Activated T-helper 2 cell treated with anti-CD3 and anti-CD28 coated beads, Interferon-gamma antibody, Interleukin-2, Interleukin-4, amounts not matched to agents 10 μg/mL and 5 μg/mL and 100 μg/mL, durations not matched to agents 14 hours and 24 hours and 36 hours (primary cell): ENCODE measurements at regions of chr6 and their contacts with region 1.

Region 1: DNA sequence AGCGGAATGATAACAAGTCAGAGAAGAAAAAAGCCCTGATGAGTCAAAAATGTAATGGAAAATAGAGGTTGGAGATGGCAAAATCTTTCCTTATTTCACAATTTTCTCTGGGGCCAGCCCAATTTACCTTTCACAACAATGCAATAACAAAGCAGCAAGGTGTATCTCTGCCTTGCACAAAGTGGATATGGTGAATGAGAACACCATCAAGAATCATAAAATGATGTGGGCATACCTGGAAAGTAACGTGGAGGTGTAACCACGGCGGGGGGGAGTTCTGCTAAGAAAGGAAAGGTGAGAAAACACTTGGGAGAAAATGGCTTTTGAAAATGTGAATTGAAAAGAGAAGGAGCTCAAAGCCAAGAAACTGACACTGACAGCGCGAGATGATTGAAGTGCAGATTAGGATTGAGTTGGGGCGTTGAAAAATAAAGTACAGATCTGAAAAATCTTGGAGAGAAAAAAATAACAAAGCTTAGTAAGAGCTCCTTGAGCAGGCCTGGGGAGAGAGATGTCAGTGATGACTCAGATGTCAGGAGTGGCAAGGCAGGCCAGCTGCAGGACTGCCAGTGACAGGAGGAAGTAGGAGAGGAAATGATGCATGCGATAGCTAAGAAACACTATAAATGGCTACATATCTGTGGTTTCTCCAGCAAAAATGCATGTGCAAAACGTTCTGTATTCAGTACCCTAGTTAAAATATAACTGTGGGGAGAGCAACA is 26.2 kb downstream of the ARHGAP18 start:
- DNase-seq: peak; percentile 64
- H3K4me3 Mint-ChIP-seq: peak overlapping the region; percentile 30
- H3K27ac Mint-ChIP-seq: peak overlapping the region; percentile 83
- H3K4me1 Mint-ChIP-seq: peaks cover 62% of the 10 kb centered on the region
- H3K27me3 Mint-ChIP-seq: no peaks in the 10 kb centered on the region

Region 2: GRCh38 chr6:129606664-129607063 is 77.1 kb before region 1 on chr6:
- intact Hi-C with region 1: loop called (anchors 1 kb)
- DNase-seq: no peak
- H3K4me3 Mint-ChIP-seq: no peak overlapping the region
- H3K27ac Mint-ChIP-seq: no peak overlapping the region
- H3K4me1 Mint-ChIP-seq: peaks cover 21% of the 10 kb centered on the region
- H3K27me3 Mint-ChIP-seq: no peaks in the 10 kb centered on the region

Region 3: DNA sequence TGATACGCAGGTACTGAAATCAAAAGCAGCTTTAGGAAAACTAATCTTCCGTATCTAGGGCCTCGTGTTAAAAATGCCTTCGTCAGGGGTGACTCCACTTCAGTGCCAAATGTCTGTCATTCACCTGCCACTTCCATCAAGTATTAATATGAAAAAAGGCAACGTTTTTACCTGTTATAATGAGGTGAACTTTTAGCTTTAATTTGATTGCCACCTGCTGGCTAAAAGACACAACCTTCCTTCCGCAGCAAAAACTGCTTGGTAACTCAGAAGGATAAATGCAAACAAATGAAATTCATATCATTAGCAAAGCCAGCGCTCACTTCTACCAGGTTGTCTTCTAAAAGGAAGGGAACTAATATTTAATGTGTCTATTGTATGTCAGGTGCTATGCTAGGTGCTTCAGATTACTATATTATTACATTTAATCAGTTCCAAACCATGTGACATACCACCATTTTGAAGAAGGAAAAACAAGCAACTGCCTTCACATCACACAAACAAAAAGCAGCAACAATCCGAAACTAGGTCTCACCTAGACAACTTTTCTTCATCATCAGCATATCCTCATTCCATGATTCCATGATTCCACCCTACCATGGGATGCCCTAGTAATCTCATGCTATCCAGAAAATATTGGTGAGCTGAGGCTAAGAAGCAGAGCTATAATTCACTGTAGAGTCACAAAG is 46.9 kb after region 1 on chr6:
- intact Hi-C with region 1: no loop called
- DNase-seq: no peak
- H3K4me3 Mint-ChIP-seq: no peak overlapping the region
- H3K27ac Mint-ChIP-seq: peak overlapping the region; percentile 8
- H3K4me1 Mint-ChIP-seq: peaks cover 19% of the 10 kb centered on the region
- H3K27me3 Mint-ChIP-seq: no peaks in the 10 kb centered on the region

Region 4: DNA sequence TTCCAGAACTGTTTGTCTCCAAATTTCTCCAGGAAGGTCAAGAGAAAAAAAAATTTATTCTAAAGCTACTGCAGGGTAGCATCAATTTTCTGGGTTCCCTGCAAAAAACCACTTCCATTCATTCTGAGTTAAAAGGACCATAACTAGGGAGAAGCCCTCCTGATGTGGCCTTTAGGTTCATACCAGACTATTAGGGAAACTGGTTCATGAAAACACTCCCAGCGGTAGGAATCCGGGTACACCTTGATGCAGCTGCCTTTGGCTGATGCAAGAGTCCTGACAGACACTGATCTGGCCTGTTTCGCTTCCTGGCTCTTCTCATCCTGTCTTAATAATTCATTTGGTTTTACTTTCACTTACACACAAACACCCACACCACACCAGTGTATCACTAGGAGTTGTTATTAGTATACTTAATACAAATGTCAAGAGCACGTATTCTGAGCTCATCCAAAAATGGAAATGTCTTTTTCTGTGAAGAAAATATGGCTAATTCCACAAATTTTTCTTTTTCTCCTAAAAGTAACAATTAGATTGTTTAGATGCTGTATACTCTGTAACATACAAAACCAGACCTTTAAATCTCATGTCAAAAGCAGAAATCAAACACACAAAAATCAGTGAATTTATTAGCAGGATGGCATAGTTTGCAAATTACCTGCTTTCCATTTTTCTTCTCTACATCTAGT is 64.6 kb after region 1 on chr6:
- intact Hi-C with region 1: loop called (anchors 2 kb)
- DNase-seq: peak; percentile 39
- H3K4me3 Mint-ChIP-seq: peak overlapping the region; percentile 55
- H3K27ac Mint-ChIP-seq: peak overlapping the region; percentile 54
- H3K4me1 Mint-ChIP-seq: peaks cover 44% of the 10 kb centered on the region
- H3K27me3 Mint-ChIP-seq: no peaks in the 10 kb centered on the region